RWPE1 (cell line): ENCODE measurements at regions of chr14 and their contacts with region 1.

Region 1: DNA sequence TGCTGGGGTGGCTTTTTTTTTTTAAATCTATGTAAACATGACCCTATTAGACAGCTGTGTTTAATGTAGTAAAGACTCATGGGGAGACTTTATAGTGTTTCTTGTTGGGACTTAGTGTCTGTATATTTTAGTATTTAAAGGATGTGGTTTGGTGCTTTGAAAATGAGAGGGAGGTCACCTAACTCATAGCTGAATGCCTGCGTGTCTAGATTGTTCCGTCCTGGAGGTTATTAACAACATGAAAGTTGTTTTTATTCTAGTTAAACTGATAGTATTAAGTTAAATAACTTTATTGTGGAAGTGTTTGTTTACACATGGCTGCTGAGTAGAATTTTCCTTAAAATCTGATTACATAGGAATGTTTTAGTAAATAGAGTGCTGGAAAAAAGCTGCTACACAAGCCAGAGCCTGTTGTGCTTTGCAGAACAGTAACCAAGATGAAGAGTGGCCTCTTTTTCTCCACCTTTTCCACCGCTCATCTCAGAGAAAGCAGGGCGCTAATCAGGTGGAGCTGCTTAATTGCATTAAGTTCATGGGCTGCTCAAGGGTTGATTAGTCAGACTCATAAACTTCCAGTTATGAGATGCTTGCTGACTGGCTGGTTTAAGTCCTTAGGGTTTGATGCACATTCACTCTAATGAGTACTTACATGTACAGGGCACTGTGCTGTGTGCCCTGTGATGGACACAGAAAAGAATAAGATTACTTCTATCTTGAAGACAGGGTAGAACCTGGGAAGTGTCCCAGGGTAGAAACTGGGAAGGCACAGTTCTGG is 62.7 kb downstream of the FBXO34 start:
- DNase-seq: no peak
- H3K27ac ChIP-seq: no peak overlapping the region
- CTCF ChIP-seq: no peak

Region 2: DNA sequence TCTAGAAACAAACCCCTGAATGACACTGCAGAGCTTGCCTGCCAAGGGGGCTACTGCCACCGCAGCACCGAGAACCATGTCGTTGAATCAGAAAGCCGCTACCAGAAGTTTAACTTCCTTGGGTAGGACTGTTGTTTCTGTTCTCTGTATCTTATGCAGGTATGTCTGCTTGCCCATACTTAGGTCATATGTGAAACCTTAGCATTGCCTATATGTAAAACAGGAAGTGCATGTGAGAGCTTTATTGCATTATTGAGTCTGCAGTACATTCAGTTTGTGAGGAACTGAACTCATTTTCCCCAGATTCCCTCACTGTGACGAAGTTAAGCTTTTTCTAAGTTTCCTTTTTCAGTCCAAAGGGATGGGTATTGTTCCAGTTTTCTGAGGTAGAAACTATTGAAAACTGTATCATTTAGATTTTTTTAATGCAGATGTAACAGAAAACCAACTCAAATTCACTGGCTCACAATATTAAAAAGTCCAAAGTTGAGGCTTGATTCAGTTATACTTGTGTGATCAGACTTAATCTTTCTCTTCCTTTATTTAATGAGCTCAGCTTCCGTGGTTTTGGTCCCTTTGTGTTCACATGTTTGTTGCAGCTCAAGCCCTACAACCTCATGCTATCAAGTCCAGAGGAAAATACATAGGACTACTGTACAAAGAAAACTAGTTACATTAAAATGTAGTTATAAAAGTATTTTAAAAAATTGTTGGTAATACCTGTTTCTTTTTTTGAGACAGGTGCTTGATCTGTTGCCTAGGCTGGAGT is 55.7 kb before region 1 on chr14:
- CTCF ChIA-PET with region 1: no interaction called
- POLR2A ChIA-PET with region 1: interaction called, 10 read pairs
- DNase-seq: no peak
- H3K27ac ChIP-seq: no peak overlapping the region
- CTCF ChIP-seq: no peak